ENCODE measurements at regions of chr6 and their contacts with region 1.

Region 1: GRCh38 chr6:133553652-133554051 is 312.5 kb downstream of the EYA4 start:
- DNase-seq: peak in 1 of 2 donors; percentile 47
- ATAC-seq: peak in 6 of 8 donors; percentile 49 to 75 (median 66)
- H3K4me3 ChIP-seq: no peak overlapping the region
- H3K27ac ChIP-seq: no peak overlapping the region
- H3K4me1 ChIP-seq: peaks cover 0 to 21% (median 6%) of the 10 kb centered on the region in 9 donors
- H3K27me3 ChIP-seq: no peaks in the 10 kb centered on the region
- CTCF ChIP-seq: peak; percentile 16 to 71 (median 59)

Region 2: DNA sequence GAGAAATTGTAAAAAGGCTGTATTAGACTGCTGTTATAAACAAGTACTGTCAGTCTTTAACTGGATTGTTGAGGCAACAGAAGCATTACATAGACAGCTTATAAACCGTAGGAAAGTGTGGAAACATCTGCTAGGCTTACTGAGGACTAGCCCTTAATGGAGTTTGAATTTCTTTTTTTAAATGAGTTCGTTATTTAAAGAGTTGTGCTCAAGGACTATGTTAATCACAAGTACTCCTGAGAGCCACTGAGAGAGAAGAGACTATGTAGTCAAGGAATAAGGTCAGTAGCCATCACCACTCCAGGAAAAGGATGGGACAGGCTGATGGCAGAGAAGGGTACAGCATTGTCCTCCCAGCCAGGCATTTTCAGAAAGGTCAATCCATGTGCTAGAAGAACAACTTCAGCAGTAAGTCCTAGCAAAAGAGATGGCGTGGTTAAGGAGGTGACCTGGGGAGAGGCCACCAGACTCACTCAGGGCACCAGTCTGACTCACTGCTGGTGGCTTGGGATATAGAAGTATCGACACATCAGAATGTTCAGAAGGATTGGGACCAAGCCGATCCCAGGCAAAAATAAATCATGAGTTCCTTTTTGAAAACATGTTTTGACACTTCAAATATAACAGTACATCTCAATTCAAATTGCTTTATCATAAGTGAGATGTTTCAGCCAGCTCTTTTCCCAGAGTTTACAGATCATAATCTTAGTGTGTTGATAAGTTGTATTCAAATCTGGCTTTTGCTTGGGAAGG is 732.8 kb before region 1 on chr6:
- intact Hi-C with region 1: loop called in 2 of 10 experiments (anchors 5 to 10 kb)
- DNase-seq: no peak
- ATAC-seq: peak in 2 of 8 donors; percentile 34 to 39
- H3K4me3 ChIP-seq: no peak overlapping the region
- H3K27ac ChIP-seq: no peak overlapping the region
- H3K4me1 ChIP-seq: peaks cover 0 to 27% (median 19%) of the 10 kb centered on the region in 9 donors
- H3K27me3 ChIP-seq: no peaks in the 10 kb centered on the region
- CTCF ChIP-seq: no peak

Region 3: GRCh38 chr6:132830334-132830751 is 723.3 kb before region 1 on chr6:
- intact Hi-C with region 1: loop called in 9 of 10 experiments (anchors 2 to 10 kb)
- DNase-seq: peak in 1 of 2 donors; percentile 9
- ATAC-seq: peak in 1 of 8 donors; percentile 57
- H3K4me3 ChIP-seq: no peak overlapping the region
- H3K27ac ChIP-seq: no peak overlapping the region
- H3K4me1 ChIP-seq: no peaks in the 10 kb centered on the region
- H3K27me3 ChIP-seq: no peaks in the 10 kb centered on the region
- CTCF ChIP-seq: peak in 7 of 9 donors; percentile 33 to 62 (median 58)

Region 4: DNA sequence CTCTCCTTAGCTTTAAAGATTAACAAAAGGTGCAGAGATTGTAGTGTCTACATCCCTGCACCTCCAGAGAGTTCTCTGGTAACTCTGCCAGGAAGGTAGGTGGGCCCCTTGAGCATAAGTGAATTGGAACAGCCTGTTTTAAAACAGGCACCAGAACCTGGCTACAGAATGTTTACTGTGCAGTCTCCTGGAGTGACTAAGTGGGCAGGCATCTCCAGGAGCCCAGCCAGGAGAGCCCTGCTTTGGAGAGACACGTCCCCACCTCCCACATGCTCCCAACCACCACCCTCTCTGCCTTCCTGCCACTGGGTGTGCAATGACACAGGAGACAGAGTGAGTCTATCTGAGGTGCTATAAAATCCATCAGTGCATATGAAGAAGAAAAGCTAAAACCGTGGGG is 422.8 kb before region 1 on chr6:
- intact Hi-C with region 1: loop called in 1 of 10 experiments (anchors 5 kb)
- DNase-seq: peak; percentile 66 to 78
- ATAC-seq: peak; percentile 93 to 99 (median 98)
- H3K4me3 ChIP-seq: no peak overlapping the region
- H3K27ac ChIP-seq: peak overlapping the region in 8 of 10 donors; percentile 51 to 83 (median 69)
- H3K4me1 ChIP-seq: peaks cover 0 to 40% (median 7%) of the 10 kb centered on the region in 9 donors
- H3K27me3 ChIP-seq: no peaks in the 10 kb centered on the region
- CTCF ChIP-seq: peak in 3 of 9 donors; percentile 41 to 51 (median 44)

Region 5: GRCh38 chr6:133184798-133185372 is 368.8 kb before region 1 on chr6:
- intact Hi-C with region 1: loop called in 4 of 10 experiments (anchors 5 to 10 kb)
- DNase-seq: no peak
- ATAC-seq: no peak
- H3K4me3 ChIP-seq: no peak overlapping the region
- H3K27ac ChIP-seq: no peak overlapping the region
- H3K4me1 ChIP-seq: no peaks in the 10 kb centered on the region
- H3K27me3 ChIP-seq: no peaks in the 10 kb centered on the region
- CTCF ChIP-seq: peak; percentile 7 to 70 (median 57)

Region 6: DNA sequence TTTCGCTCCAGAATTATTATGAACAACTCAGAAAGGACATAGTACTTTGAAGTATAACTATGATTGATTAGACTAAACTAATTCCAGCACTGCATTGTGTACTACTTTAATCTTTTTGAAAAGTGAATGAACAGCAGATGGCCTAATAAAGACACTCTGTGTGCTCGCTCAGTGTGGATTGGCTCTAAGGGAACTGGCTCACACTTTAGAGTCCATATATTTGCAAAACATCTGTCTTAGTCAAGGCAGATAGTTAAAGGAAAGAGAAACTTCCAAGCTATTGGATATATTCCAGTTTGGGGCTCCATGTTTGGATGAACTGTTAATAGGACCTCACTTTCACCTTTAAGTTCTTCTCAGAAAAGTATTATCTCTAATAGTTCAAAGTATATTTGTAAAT is 93.6 kb before region 1 on chr6:
- intact Hi-C with region 1: no loop called
- DNase-seq: no peak
- ATAC-seq: no peak
- H3K4me3 ChIP-seq: no peak overlapping the region
- H3K27ac ChIP-seq: no peak overlapping the region
- H3K4me1 ChIP-seq: peaks cover 0 to under 1% (median 0%) of the 10 kb centered on the region in 9 donors
- H3K27me3 ChIP-seq: no peaks in the 10 kb centered on the region
- CTCF ChIP-seq: no peak

Region 7: GRCh38 chr6:134097114-134097707 is 543.6 kb after region 1 on chr6:
- intact Hi-C with region 1: loop called in 1 of 10 experiments (anchors 10 kb)
- DNase-seq: peak; percentile 13 to 64
- ATAC-seq: peak in 2 of 8 donors; percentile 49 to 53
- H3K4me3 ChIP-seq: no peak overlapping the region
- H3K27ac ChIP-seq: no peak overlapping the region
- H3K4me1 ChIP-seq: no peaks in the 10 kb centered on the region
- H3K27me3 ChIP-seq: peaks cover 0 to 11% (median 0%) of the 10 kb centered on the region in 7 donors
- CTCF ChIP-seq: peak; percentile 28 to 82 (median 71)

Measured in heart right ventricle (tissue), 16 donors.